ENCODE measurements at regions of chr7 and their contacts with region 1.

Region 1: DNA sequence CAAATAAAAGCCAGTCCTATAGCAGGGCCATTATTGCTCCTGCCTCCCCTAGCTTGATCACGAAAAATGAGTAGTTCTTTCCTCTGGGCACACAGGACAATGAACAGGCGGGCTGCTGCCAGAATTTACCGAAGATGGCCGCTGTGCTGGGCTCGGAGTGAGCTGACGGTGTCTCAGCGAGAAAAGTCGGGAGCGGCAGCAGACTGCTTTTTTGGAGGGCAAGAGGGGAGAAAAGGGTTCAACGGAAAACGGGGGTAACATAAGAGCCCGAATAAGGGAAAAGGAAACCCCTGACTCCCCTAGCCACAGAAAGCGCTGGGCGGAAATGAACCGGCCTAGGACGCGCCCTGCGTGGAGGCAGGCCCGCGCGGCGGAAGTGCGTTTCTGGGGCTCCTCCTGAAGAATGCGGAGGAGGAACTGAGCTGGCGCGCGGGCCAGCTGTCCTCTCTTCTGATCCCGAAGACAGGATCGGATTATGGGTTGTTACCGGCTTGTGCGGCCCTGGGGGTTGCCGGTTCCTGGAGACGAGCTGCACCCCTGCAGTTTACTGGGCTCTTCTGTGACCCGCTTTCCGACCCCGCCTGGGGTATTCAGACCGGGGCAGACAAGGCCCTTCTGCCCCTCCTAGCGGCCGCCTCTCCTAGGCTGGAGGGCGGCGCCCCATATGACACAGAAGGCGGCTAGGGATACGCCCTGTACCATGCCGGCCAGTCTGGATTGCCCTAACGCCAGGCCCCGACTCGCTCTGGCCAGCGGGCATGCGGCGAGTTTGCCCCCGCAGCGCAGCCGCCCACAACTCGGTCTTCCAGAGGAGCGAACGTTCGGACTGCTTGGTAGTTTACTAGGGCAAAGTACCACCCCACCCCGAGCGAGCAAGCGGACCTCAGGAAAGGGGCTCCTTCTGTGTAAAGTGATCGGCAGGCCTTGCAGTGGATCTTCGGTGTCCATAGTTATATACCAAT is 30.1 kb upstream of the KMT2E start:
- DNase-seq: peak; percentile 91
- H3K4me3 ChIP-seq: peak overlapping the region; percentile 34 to 71 (median 49)
- H3K27ac ChIP-seq: peak overlapping the region; percentile 98
- H3K4me1 ChIP-seq: peaks cover 56% of the 10 kb centered on the region
- H3K27me3 ChIP-seq: no peaks in the 10 kb centered on the region
- CTCF ChIP-seq: peak; percentile 26 to 64
- POLR2A ChIP-seq: peak; percentile 97

Region 2: GRCh38 chr7:104603957-104604356 is 379.9 kb before region 1 on chr7:
- CTCF ChIA-PET with region 1: no interaction called
- POLR2A ChIA-PET with region 1: no interaction called
- dilution Hi-C with region 1: no loop called
- intact Hi-C with region 1: no loop called
- DNase-seq: no peak
- H3K4me3 ChIP-seq: no peak overlapping the region
- H3K27ac ChIP-seq: no peak overlapping the region
- H3K4me1 ChIP-seq: no peaks in the 10 kb centered on the region
- H3K27me3 ChIP-seq: no peaks in the 10 kb centered on the region
- CTCF ChIP-seq: no peak
- POLR2A ChIP-seq: no peak

Region 3: GRCh38 chr7:104931181-104931781 is 52.6 kb before region 1 on chr7:
- CTCF ChIA-PET with region 1: interaction called, 72 read pairs
- POLR2A ChIA-PET with region 1: no interaction called
- dilution Hi-C with region 1: no loop called
- intact Hi-C with region 1: no loop called
- DNase-seq: peak; percentile 65
- H3K4me3 ChIP-seq: no peak overlapping the region
- H3K27ac ChIP-seq: no peak overlapping the region
- H3K4me1 ChIP-seq: no peaks in the 10 kb centered on the region
- H3K27me3 ChIP-seq: no peaks in the 10 kb centered on the region
- CTCF ChIP-seq: no peak
- POLR2A ChIP-seq: no peak

Region 4: DNA sequence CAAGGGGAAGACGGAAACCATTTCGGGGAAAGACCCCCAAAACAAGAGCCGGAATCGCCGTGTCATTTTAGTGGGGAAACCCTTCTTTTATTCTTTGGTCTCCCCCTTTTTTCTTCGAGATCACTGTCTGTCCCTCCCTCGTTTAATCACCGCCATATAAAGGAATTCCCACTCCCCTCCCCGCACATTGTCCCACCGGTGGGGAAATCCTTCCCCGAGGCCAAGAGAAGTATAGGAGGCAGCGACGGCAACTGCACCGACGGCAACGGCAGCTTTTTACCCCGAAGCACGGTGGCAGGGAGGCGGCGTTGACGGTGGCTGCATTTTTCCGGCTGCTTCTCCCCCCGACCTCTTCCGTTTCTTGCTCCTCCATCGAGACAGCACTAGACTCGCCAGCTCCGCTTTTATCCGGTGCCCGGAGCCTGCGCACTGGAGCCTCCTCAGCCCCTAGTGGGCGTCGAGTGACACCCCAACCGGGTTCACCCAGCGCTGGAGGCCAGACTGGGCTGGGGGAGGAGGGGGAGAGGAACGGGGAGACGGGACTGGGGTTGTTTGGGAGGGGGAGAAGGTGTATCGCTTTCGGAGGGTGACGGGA is 29.5 kb after region 1 on chr7:
- CTCF ChIA-PET with region 1: interaction called, 97 read pairs
- POLR2A ChIA-PET with region 1: interaction called, 35 read pairs
- dilution Hi-C with region 1: no loop called
- intact Hi-C with region 1: loop called (anchors 1 kb)
- DNase-seq: peak; percentile 94
- H3K4me3 ChIP-seq: peak overlapping the region; percentile 97 to 99 (median 98)
- H3K27ac ChIP-seq: peak overlapping the region; percentile 98
- H3K4me1 ChIP-seq: peaks cover 31% of the 10 kb centered on the region
- H3K27me3 ChIP-seq: no peaks in the 10 kb centered on the region
- CTCF ChIP-seq: peak; percentile 56 to 72
- POLR2A ChIP-seq: peak; percentile 21

Region 5: GRCh38 chr7:105067691-105068090 is 83.8 kb after region 1 on chr7:
- CTCF ChIA-PET with region 1: interaction called, 11 read pairs
- POLR2A ChIA-PET with region 1: no interaction called
- dilution Hi-C with region 1: no loop called
- intact Hi-C with region 1: no loop called
- DNase-seq: no peak
- H3K4me3 ChIP-seq: no peak overlapping the region
- H3K27ac ChIP-seq: no peak overlapping the region
- H3K4me1 ChIP-seq: no peaks in the 10 kb centered on the region
- H3K27me3 ChIP-seq: no peaks in the 10 kb centered on the region
- CTCF ChIP-seq: no peak
- POLR2A ChIP-seq: no peak

Region 6: DNA sequence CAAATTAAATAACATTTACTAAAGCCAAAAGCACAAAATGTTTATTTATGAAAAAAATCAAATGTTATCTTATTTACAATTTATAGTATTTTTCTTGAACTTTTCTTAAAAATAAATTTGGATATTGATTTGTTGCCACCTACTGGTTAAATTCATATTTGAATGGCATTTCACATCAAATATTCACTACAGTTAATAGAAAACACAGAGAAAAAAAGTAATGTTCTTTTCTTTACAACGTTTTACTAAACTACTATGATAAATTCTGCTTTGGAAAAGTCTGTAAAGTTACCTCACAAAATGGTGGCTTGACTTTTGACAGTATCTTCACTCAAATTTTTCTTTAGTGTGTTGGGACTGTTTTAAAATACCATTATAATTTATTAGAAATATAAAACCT is 352.1 kb after region 1 on chr7:
- CTCF ChIA-PET with region 1: no interaction called
- POLR2A ChIA-PET with region 1: no interaction called
- dilution Hi-C with region 1: no loop called
- intact Hi-C with region 1: loop called (anchors 10 kb)
- DNase-seq: peak; percentile 35
- H3K4me3 ChIP-seq: no peak overlapping the region
- H3K27ac ChIP-seq: no peak overlapping the region
- H3K4me1 ChIP-seq: peaks cover 3% of the 10 kb centered on the region
- H3K27me3 ChIP-seq: no peaks in the 10 kb centered on the region
- CTCF ChIP-seq: peak in 1 of 2 donors; percentile 15
- POLR2A ChIP-seq: no peak

Region 7: DNA sequence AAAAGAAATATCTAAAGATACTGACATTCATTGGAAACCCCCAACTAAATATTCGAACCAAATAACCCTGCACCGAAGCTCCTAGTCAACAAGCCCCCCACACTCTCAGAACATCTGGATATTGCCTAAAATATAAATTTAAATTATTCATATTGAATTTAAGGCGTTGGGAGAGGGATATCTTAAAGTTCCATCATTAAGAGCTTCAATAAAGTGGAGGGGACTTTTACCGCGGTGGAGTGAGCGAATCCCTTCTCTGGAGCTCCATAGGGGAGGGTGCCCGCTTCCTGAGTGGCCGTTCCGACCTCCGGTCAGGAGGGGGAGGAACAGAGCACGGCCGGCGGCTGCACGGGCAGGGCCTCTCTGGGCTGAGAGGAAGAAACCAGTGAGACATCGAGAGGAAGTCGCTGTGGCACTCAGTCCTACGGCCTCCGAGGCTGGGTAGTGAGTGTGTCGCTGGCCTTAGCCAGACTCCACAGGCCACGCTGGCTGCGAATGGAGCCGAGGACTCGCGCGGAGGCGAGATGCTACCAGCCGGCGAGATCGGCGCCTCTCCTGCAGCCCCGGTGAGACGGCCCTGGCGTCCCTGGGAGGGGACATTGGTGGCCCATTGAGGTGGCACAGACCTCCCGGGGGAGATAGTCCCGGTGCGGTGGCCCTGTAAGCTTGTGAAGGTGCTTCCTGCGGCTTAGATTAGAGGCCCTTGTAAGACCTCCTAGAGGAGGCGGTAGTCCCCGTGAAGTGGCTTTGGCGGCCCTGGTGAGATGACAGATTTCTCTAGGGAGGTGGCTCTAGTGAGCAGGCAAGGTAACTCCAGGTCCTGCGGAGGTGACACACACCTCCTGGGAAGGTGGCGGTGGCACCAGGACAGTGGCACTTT is 548.2 kb after region 1 on chr7 and contains the start of gene RINT1:
- CTCF ChIA-PET with region 1: interaction called, 10 read pairs
- POLR2A ChIA-PET with region 1: no interaction called
- dilution Hi-C with region 1: no loop called
- intact Hi-C with region 1: no loop called
- DNase-seq: peak; percentile 93
- H3K4me3 ChIP-seq: peak within 1 kb of the TSS; percentile 69 to 87 (median 70)
- H3K27ac ChIP-seq: peak within 1 kb of the TSS; percentile 42
- H3K4me1 ChIP-seq: peaks cover 11% of the 10 kb centered on the region
- H3K27me3 ChIP-seq: no peaks in the 10 kb centered on the region
- CTCF ChIP-seq: peak; percentile 73 to 92
- POLR2A ChIP-seq: peak; percentile 99
- total RNA-seq, gene RINT1: 23.4 and 24.8 TPM in 2 replicates

Measured in endothelial cell of umbilical vein (primary cell).